A673 (cell line): ENCODE measurements at regions of chr16 and their contacts with region 1.

Region 1: DNA sequence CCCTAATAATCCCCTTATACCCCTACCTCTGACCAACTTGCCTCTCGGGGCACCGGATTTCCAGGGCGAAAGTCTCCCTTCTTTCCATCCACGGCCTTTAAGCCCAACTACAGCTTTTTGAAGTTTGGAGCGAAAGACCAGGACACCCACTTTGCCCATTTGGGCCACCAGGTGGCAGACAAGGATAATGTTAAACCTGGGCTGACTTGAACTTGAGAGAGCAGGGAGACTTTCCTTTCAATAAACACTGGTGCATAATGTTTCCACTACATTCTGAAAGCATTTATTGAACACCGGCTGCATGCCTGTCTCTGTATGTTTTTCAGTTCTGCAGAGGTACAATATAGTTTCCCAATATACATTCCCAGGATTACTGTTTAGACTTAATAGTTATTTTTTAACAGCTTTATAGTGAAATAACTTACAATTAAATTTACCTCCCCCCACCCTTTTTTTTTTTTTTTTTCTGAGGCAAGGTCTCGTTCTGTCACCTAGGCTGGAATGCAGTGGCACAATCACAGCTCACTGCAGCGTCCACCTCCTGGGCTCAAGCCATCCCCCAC is 6.9 kb upstream of the CES3 start:
- DNase-seq: peak; percentile 87
- H3K4me3 ChIP-seq: no peak overlapping the region
- H3K27ac ChIP-seq: no peak overlapping the region
- H3K4me1 ChIP-seq: no peaks in the 10 kb centered on the region
- H3K27me3 ChIP-seq: no peaks in the 10 kb centered on the region
- CTCF ChIP-seq: peak; percentile 90

Region 2: DNA sequence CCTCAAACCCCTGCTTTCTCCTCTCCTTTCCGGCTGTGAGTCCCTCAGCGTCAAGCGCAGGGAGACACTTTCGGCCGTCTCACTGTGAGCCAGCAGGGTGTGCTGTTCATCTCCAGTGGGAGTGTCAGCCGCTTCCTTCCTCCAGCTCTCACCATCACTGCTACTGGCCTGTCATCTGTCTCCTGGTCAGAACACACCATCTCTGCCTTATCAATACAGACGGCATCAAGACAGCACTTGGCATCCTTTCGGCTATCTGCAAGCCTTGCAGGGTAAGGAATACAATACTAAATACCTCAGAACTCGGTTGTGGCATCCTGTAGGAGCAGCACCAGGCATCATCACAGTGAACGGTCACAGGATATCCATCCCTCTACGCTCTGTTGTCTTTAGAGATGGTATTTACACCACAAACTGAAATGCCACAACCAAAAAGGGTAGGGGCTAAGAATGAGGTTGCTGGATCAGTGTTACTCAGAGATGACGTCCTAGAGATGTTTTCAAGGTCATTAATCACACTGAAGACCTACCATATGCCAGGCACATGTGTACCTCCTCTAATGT is 237.0 kb before region 1 on chr16:
- CTCF ChIA-PET with region 1: no interaction called
- POLR2A ChIA-PET with region 1: no interaction called
- intact Hi-C with region 1: no loop called
- DNase-seq: peak; percentile 64
- H3K4me3 ChIP-seq: no peak overlapping the region
- H3K27ac ChIP-seq: no peak overlapping the region
- H3K4me1 ChIP-seq: no peaks in the 10 kb centered on the region
- H3K27me3 ChIP-seq: no peaks in the 10 kb centered on the region
- CTCF ChIP-seq: peak; percentile 69

Region 3: DNA sequence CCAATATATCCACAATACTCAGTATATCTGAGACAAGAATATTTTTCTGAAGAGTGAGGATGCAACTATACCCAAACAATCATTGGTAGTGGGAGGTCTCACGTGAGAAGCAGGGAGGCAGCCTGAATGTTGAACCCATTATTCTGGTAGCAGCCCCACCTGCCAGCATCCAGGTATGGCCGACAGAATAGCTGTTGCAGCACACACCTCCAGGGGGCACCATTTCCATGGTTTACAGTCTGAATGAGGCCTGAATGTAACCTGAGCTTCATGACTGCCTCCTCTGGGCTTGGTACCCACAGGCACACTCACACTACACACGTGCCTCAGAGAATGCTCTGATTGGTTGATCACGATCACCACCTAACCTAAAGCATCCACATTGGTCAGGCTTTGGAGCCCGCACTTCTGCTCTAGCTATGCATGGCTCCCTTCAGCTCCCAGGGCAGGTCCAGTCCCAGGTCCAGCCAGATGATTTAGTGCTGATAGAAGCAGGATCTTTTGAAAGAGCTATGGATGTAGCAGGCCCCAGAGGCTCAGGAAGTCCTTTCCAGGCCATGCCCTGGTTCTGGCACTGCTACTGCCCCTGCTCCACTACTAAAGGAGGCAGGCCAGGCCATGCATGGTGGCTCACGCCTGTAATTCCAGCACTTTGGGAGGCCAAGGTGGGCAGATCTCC is 63.8 kb after region 1 on chr16:
- CTCF ChIA-PET with region 1: no interaction called
- POLR2A ChIA-PET with region 1: no interaction called
- intact Hi-C with region 1: loop called (anchors 5 kb)
- DNase-seq: peak; percentile 96
- H3K4me3 ChIP-seq: no peak overlapping the region
- H3K27ac ChIP-seq: no peak overlapping the region
- H3K4me1 ChIP-seq: peaks cover 18% of the 10 kb centered on the region
- H3K27me3 ChIP-seq: no peaks in the 10 kb centered on the region
- CTCF ChIP-seq: peak; percentile 96

Region 4: DNA sequence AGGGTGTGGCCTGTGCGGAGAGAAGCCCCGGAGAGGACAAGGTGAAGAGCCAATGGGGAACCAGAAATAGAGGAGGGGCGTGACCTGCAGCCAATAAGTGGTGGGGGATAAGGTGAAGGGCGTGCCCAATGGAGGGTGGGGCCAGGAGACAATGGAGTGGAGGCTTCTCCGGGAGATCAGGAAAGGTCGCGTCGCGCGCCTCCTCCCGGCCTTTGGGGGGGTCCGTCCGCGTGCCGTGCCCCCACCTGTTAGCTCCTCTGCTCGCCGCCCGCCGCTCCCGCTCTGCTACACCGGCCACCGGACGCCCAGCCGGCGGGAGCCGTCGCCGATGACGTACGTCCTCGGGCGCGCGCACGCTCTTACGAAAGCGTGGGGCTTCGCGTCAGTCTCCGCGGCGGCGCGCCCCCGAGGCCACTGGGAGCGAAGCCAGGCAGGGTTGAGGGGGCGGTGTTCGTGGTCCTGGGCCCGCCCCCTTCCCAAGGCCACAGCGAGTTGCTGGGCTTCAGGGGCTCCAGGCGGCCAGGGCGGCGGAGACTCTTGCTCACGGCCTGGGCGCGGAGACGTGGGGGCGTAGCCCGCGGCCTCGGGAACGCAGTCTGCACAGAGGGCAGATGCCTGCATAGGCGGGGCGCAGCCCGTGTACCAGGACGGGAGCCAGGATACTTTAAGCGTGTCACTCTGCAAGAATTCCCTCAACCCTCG is 229.6 kb after region 1 on chr16 and contains the start of gene MATCAP1:
- CTCF ChIA-PET with region 1: interaction called, 3 read pairs
- POLR2A ChIA-PET with region 1: no interaction called
- intact Hi-C with region 1: loop called (anchors 2 kb)
- DNase-seq: peak; percentile 99
- H3K4me3 ChIP-seq: peak within 1 kb of the TSS; percentile 68
- H3K27ac ChIP-seq: peak within 1 kb of the TSS; percentile 99
- H3K4me1 ChIP-seq: peaks cover 14% of the 10 kb centered on the region
- H3K27me3 ChIP-seq: no peaks in the 10 kb centered on the region
- CTCF ChIP-seq: no peak
- total RNA-seq, gene MATCAP1: 33.9 and 36.8 TPM in 2 replicates

Region 5: GRCh38 chr16:67399181-67399733 is 445.1 kb after region 1 on chr16:
- CTCF ChIA-PET with region 1: no interaction called
- POLR2A ChIA-PET with region 1: no interaction called
- intact Hi-C with region 1: loop called (anchors 5 kb)
- DNase-seq: peak; percentile 54
- H3K4me3 ChIP-seq: no peak overlapping the region
- H3K27ac ChIP-seq: no peak overlapping the region
- H3K4me1 ChIP-seq: peaks cover 5% of the 10 kb centered on the region
- H3K27me3 ChIP-seq: peaks cover under 1% of the 10 kb centered on the region
- CTCF ChIP-seq: peak; percentile 90